ENCODE measurements at regions of chr9 and their contacts with region 1.

Region 1: GRCh38 chr9:129080602-129081387 is at the start of gene DOLPP1:
- DNase-seq: peak; percentile 100
- H3K4me3 ChIP-seq: peak within 1 kb of the TSS; percentile 82 to 89 (median 88)
- H3K27ac ChIP-seq: peak within 1 kb of the TSS; percentile 41
- H3K4me1 ChIP-seq: peaks cover 17% of the 10 kb centered on the region
- H3K27me3 ChIP-seq: no peaks in the 10 kb centered on the region
- CTCF ChIP-seq: no peak
- total RNA-seq, gene DOLPP1: 11.3 to 20.1 TPM

Region 2: DNA sequence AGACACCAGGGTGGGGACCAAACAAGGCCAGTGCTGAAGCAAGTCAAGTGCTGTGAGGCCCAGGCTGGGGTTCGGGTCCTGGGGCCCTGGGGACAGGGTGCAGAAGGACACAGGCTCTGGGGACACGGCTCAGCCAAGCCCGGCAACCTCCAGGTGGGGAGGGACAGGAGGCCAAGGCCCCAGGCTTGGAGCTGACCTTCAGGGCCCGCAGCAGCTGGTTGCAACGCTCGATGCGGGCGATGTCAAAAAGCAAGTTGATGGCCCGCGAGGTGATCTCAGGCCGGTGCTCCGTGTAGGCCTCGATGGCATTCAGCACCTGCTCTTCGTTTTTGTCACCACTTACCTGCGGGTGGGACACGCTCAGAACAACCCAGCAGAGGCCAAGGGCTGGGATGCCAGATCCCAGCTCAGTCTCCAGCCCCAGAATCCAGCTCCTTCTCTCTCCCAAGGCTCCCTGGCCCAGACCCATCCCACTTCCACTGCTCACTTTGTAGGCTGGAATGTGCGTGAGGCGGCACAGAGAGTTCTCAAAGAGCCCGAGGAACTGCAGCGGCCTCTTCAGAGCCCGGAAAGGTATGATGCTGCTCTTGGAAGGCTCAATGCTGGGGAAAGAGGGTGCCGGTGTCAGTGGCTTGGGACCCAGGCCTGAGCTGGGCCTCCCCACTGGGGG is 329.7 kb before region 1 on chr9:
- CTCF ChIA-PET with region 1: no interaction called
- dilution Hi-C with region 1: no loop called
- in situ Hi-C with region 1: no loop called
- intact Hi-C with region 1: no loop called
- DNase-seq: no peak
- H3K4me3 ChIP-seq: no peak overlapping the region
- H3K27ac ChIP-seq: no peak overlapping the region
- H3K4me1 ChIP-seq: no peaks in the 10 kb centered on the region
- H3K27me3 ChIP-seq: no peaks in the 10 kb centered on the region
- CTCF ChIP-seq: no peak

Region 3: DNA sequence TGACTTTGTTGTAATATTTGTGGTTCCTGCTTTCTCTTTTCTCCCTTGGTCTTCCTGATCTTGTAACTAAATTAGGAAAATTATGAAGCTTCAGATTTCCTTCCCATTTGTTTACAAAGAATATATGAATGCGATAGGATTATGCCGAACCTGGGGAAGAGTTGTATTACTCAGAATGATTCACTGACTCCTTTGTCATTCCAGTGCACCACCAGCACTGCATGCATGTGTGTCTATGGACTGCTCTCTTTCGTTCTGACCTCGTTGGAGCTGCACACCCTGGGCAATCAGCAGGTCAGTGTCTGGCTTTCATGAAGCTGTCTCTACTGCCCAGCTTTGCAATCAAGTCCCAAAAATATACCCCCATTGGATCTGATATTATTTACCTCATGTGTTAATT is 107.8 kb before region 1 on chr9:
- CTCF ChIA-PET with region 1: no interaction called
- dilution Hi-C with region 1: loop called (anchors 5 kb)
- in situ Hi-C with region 1: no loop called
- intact Hi-C with region 1: no loop called
- DNase-seq: peak; percentile 51
- H3K4me3 ChIP-seq: no peak overlapping the region
- H3K27ac ChIP-seq: no peak overlapping the region
- H3K4me1 ChIP-seq: no peaks in the 10 kb centered on the region
- H3K27me3 ChIP-seq: no peaks in the 10 kb centered on the region
- CTCF ChIP-seq: no peak

Region 4: GRCh38 chr9:129036241-129036922 is 44.4 kb before region 1 on chr9 and contains the start of gene MIGA2:
- CTCF ChIA-PET with region 1: no interaction called
- dilution Hi-C with region 1: no loop called
- in situ Hi-C with region 1: no loop called
- intact Hi-C with region 1: loop called (anchors 5 kb)
- DNase-seq: peak; percentile 99
- H3K4me3 ChIP-seq: peak within 1 kb of the TSS; percentile 84 to 100 (median 89)
- H3K27ac ChIP-seq: peak within 1 kb of the TSS; percentile 42
- H3K4me1 ChIP-seq: peaks cover 17% of the 10 kb centered on the region
- H3K27me3 ChIP-seq: no peaks in the 10 kb centered on the region
- CTCF ChIP-seq: no peak
- total RNA-seq, gene MIGA2: 16.3 to 24.7 TPM

Region 5: DNA sequence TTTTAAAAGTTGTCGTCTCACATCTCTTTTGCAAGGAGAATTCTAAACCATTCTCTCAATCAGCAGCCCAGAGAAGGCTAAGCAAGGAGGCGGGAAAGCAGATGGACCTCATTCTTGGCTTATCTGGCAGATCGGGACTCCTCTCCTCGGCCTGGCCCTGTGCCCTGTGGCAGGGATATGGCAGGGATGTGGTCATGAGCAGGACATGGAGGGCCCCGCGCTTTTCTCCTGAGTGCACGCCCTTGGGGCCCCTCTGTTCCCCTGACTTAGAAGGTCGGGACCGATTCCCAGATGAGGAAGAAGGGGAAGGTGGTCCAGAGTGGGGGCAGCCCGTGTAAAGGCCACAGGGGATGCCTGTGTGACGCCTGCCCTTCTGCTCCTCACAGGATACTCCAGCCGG is 32.8 kb before region 1 on chr9:
- CTCF ChIA-PET with region 1: no interaction called
- dilution Hi-C with region 1: loop called (anchors 5 kb)
- in situ Hi-C with region 1: no loop called
- intact Hi-C with region 1: no loop called
- DNase-seq: no peak
- H3K4me3 ChIP-seq: no peak overlapping the region
- H3K27ac ChIP-seq: no peak overlapping the region
- H3K4me1 ChIP-seq: peaks cover 4% of the 10 kb centered on the region
- H3K27me3 ChIP-seq: no peaks in the 10 kb centered on the region
- CTCF ChIP-seq: no peak

Region 6: GRCh38 chr9:129093421-129094204 is 12.8 kb after region 1 on chr9:
- CTCF ChIA-PET with region 1: no interaction called
- dilution Hi-C with region 1: no loop called
- in situ Hi-C with region 1: no loop called
- intact Hi-C with region 1: loop called (anchors 1 kb)
- DNase-seq: no peak
- H3K4me3 ChIP-seq: no peak overlapping the region
- H3K27ac ChIP-seq: no peak overlapping the region
- H3K4me1 ChIP-seq: no peaks in the 10 kb centered on the region
- H3K27me3 ChIP-seq: no peaks in the 10 kb centered on the region
- CTCF ChIP-seq: no peak

Region 7: GRCh38 chr9:129118799-129119198 is 38.0 kb after region 1 on chr9:
- CTCF ChIA-PET with region 1: no interaction called
- dilution Hi-C with region 1: loop called (anchors 5 kb)
- in situ Hi-C with region 1: no loop called
- intact Hi-C with region 1: no loop called
- DNase-seq: no peak
- H3K4me3 ChIP-seq: no peak overlapping the region
- H3K27ac ChIP-seq: no peak overlapping the region
- H3K4me1 ChIP-seq: peaks cover 3% of the 10 kb centered on the region
- H3K27me3 ChIP-seq: no peaks in the 10 kb centered on the region
- CTCF ChIP-seq: no peak